ENCODE measurements at regions of chr15 and their contacts with region 1.

Region 1: DNA sequence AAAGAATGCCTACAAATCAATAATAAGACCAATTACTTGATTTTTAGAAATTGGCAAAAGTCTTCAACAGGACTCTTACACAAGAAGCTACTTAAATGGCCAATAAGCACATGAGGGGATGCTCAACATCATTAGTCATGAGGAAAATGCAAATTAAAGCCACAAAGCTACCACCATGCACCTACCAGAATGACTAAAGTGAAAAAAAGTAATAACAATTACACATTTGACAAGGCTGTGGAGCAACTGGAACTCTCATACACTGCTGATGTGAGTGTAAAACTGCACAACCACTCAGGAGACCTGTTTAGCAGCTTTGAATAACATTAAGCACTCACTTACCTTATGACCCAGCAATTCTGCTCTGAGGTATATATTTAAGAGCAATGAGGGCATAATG is 68.4 kb downstream of the PPCDC start:
- DNase-seq: peak; percentile 82
- ATAC-seq: peak; percentile 64
- H3K4me3 ChIP-seq: no peak overlapping the region
- H3K27ac ChIP-seq: 0 out of 2 replicates have a peak overlapping the region, but pooled peaks have one; percentile 17
- H3K4me1 ChIP-seq: peaks cover 12% of the 10 kb centered on the region
- H3K27me3 ChIP-seq: no peaks in the 10 kb centered on the region
- CTCF ChIP-seq: no peak
- EP300 ChIP-seq: peak; percentile 55 to 67; a peak in 2 of 4 replicates
- POLR2A ChIP-seq: no peak
- RAD21 ChIP-seq: no peak

Region 2: DNA sequence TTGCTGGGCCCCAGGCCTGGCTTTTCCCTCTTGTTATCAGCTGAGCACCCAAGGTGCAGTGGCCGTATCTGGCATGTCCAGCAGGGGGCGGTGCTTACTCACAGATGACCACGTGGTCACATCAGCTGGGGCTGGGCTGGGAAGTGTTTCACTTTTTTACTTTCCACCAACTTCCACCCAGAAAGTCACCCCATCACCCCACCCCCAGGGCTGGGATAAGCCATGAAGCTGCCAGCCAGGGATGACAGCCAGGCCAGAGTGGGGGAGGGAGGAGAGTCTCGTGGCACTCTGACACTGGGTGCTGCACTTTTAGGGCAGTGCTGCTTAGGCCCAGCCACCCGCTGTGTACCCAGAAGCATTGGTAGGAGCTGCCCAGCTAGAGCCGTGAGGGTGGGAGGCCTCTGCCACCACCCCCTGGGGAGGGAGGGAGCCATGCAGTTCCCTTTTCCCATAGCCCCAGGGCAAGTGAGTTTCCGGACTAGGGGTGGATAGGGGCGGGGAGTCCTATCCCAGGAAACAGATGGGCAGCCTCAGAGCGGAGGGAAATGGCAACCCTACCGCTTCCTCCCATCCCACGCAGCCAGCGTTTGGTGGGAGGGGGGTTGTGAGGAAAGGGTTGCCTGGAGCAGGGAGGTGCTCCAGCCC is 62.3 kb before region 1 on chr15:
- CTCF ChIA-PET with region 1: interaction called, 3 read pairs
- POLR2A ChIA-PET with region 1: no interaction called
- RAD21 ChIA-PET with region 1: interaction called, 7 read pairs
- SMC1A ChIA-PET with region 1: interaction called, 3 read pairs
- in situ Hi-C with region 1: no loop called
- intact Hi-C with region 1: loop called (anchors 1 kb)
- DNase-seq: no peak
- ATAC-seq: peak; percentile 90
- H3K4me3 ChIP-seq: 0 out of 2 replicates have a peak overlapping the region, but pooled peaks have one; percentile 26
- H3K27ac ChIP-seq: peak overlapping the region; percentile 74
- H3K4me1 ChIP-seq: peaks cover 49% of the 10 kb centered on the region
- H3K27me3 ChIP-seq: no peaks in the 10 kb centered on the region
- CTCF ChIP-seq: peak; percentile 89 to 97 (median 92); a peak in 5 of 6 replicates
- EP300 ChIP-seq: no peak
- POLR2A ChIP-seq: no peak
- RAD21 ChIP-seq: peak; percentile 98

Region 3: DNA sequence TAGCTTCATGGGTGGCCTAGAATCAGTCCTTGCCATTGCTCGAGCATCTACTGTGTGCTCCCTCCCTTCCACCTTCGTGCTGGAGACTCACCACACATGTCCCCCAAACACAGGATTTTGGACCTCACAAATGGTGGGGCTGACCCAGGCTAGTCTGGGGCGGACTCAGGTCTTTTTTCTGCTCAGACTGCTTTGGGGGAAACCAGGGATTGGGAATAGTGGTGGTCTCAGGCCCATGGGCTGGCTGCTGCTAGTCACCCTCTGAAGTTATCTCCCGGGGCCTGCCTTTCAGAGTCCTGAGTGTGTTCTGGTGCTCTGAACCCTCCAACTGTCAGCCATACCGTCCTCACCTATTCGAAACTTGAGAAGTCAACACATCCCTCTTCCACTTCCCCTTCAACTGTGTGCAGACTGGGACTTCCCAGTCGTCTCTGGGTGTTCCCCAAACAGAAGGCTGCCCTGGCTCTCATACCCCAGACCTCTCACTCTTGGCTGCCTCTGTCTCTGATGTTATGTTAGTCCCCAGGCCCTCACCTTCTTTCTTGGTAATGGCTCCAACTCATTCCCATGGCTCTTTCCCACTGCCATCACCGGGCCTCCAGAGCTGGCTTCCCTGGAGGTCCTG is 22.4 kb before region 1 on chr15:
- CTCF ChIA-PET with region 1: interaction called, 5 read pairs
- POLR2A ChIA-PET with region 1: interaction called, 46 read pairs
- RAD21 ChIA-PET with region 1: interaction called, 25 read pairs
- SMC1A ChIA-PET with region 1: interaction called, 42 read pairs
- in situ Hi-C with region 1: no loop called
- intact Hi-C with region 1: loop called (anchors 2 kb)
- DNase-seq: peak; percentile 87
- ATAC-seq: peak; percentile 92
- H3K4me3 ChIP-seq: no peak overlapping the region
- H3K27ac ChIP-seq: peak overlapping the region; percentile 89
- H3K4me1 ChIP-seq: peaks cover 58% of the 10 kb centered on the region
- H3K27me3 ChIP-seq: no peaks in the 10 kb centered on the region
- CTCF ChIP-seq: no peak
- EP300 ChIP-seq: peak; percentile 90 to 91; a peak in 3 of 4 replicates
- POLR2A ChIP-seq: peak; percentile 65
- RAD21 ChIP-seq: no peak; the same call in 1 of the 2 replicates

Region 4: DNA sequence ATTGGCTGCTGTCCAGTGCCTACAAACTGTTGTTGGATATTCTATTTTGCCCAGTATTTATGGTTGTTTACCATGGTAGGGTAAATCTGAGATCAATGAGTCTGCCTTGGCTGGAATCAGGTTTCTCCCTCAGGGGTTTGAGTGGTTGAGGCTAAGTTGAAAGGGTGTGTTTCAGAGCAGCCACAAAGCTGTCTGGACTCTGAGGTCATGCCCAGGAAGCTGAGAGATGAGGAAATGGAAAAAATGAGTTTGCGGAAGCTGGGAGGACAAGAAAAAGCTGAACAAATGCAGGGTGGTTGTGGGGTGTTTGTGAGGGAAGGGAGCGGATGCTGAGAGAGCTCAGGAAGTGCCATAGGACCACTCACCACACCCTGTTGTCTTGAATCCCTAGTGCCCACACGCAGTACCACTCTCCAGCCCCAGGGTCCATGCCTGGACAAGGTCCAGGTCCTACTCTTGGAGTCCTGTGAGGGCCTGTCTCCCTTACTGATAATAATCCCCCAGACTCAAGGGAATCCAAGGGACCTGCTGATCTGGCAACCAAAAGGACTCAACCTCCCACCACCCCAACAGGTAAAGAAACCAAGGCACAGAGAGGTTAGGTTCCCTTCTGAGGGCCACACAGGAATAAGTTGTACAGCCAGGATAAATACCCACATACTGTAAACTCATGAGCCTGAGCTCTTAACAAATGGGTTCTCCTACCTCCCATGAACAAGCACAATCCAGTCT is 13.2 kb after region 1 on chr15:
- CTCF ChIA-PET with region 1: interaction called, 9 read pairs
- POLR2A ChIA-PET with region 1: interaction called, 9 read pairs
- RAD21 ChIA-PET with region 1: interaction called, 19 read pairs
- SMC1A ChIA-PET with region 1: interaction called, 97 read pairs
- in situ Hi-C with region 1: no loop called
- intact Hi-C with region 1: loop called (anchors 1 kb)
- DNase-seq: peak; percentile 88
- ATAC-seq: peak; percentile 73
- H3K4me3 ChIP-seq: no peak overlapping the region
- H3K27ac ChIP-seq: peak overlapping the region; percentile 76
- H3K4me1 ChIP-seq: peaks cover 59% of the 10 kb centered on the region
- H3K27me3 ChIP-seq: no peaks in the 10 kb centered on the region
- CTCF ChIP-seq: 0 out of 6 replicates have a peak, but pooled peaks of 1 of the 3 experiments have one; percentile 6
- EP300 ChIP-seq: peak; percentile 61 to 76; a peak in 3 of 4 replicates
- POLR2A ChIP-seq: no peak; the same call in 1 of the 2 replicates
- RAD21 ChIP-seq: 0 out of 2 replicates have a peak, but pooled peaks have one; percentile 21

Region 5: DNA sequence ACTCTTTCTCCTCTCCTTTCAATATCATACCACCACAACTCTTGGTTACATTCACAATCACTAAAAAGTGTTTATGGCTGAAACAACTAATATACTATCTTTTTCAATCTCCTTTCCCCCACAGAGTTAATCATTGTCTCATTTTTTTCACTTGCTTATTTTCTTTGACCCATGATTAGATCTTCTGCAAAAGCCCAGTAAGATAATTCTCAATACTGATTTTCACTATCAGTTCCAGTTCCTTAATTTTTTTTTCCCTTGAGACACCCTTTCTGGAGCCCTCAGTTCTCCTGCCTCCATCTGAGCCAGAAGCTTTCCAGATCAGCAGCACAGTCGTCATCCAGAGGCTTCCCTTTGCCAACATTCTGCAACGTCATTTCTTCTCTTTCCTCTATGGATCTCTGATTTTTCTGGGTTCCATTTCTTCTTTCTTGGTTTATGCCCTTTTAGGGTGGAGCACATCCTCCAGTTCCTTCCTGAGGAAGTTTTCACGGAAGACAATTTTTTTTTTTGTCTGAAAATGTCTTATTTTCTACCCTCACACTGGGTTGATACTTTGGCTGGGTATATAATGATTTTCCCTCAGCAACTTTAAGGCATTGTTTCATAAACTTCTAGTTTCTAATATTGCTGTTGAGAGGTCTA is 21.2 kb after region 1 on chr15:
- CTCF ChIA-PET with region 1: interaction called, 4 read pairs
- POLR2A ChIA-PET with region 1: interaction called, 9 read pairs
- RAD21 ChIA-PET with region 1: interaction called, 19 read pairs
- SMC1A ChIA-PET with region 1: interaction called, 97 read pairs
- in situ Hi-C with region 1: no loop called
- intact Hi-C with region 1: loop called (anchors 1 kb)
- DNase-seq: peak; percentile 91
- ATAC-seq: peak; percentile 78
- H3K4me3 ChIP-seq: no peak overlapping the region
- H3K27ac ChIP-seq: peak overlapping the region; percentile 99
- H3K4me1 ChIP-seq: peaks cover 62% of the 10 kb centered on the region
- H3K27me3 ChIP-seq: no peaks in the 10 kb centered on the region
- CTCF ChIP-seq: no peak
- EP300 ChIP-seq: peak; percentile 94 to 98; a peak in 3 of 4 replicates
- POLR2A ChIP-seq: no peak
- RAD21 ChIP-seq: no peak; the same call in 1 of the 2 replicates

Region 6: DNA sequence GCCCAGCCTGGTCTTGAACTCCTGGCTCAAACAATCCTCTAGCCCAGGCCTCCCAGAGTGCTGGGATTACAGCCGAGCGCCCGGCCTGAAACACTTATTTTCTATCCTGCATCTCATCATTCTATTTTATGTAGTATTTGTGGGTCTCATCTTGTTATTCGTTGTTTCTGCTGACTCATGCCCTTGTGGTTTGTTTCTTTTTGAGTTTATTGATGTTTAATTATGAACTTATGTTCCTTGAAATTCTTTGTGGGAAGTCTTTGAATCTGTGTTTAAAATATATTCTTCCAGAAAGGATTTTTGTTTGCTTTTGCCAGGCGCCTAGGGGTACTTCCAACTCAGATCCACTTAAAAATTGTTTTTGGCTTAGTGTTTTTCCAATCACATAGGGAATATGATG is 31.6 kb after region 1 on chr15:
- CTCF ChIA-PET with region 1: no interaction called
- POLR2A ChIA-PET with region 1: interaction called, 3 read pairs
- RAD21 ChIA-PET with region 1: interaction called, 10 read pairs
- SMC1A ChIA-PET with region 1: interaction called, 15 read pairs
- in situ Hi-C with region 1: no loop called
- intact Hi-C with region 1: no loop called
- DNase-seq: no peak
- ATAC-seq: no peak
- H3K4me3 ChIP-seq: no peak overlapping the region
- H3K27ac ChIP-seq: peak overlapping the region; percentile 41
- H3K4me1 ChIP-seq: peaks cover 41% of the 10 kb centered on the region
- H3K27me3 ChIP-seq: no peaks in the 10 kb centered on the region
- CTCF ChIP-seq: no peak
- EP300 ChIP-seq: no peak
- POLR2A ChIP-seq: no peak
- RAD21 ChIP-seq: no peak

Region 7: GRCh38 chr15:75130597-75131268 is 38.9 kb after region 1 on chr15:
- CTCF ChIA-PET with region 1: interaction called, 4 read pairs
- POLR2A ChIA-PET with region 1: interaction called, 9 read pairs
- RAD21 ChIA-PET with region 1: interaction called, 21 read pairs
- SMC1A ChIA-PET with region 1: interaction called, 21 read pairs
- in situ Hi-C with region 1: no loop called
- intact Hi-C with region 1: loop called (anchors 1 kb)
- DNase-seq: peak; percentile 89
- ATAC-seq: peak; percentile 92
- H3K4me3 ChIP-seq: peak overlapping the region; percentile 13; the same call in 1 of the 2 replicates
- H3K27ac ChIP-seq: peak overlapping the region; percentile 99
- H3K4me1 ChIP-seq: peaks cover 67% of the 10 kb centered on the region
- H3K27me3 ChIP-seq: no peaks in the 10 kb centered on the region
- CTCF ChIP-seq: no peak
- EP300 ChIP-seq: peak; percentile 55 to 82; a peak in 3 of 4 replicates
- POLR2A ChIP-seq: no peak
- RAD21 ChIP-seq: 0 out of 2 replicates have a peak, but pooled peaks have one; percentile 9